ENCODE measurements at regions of chr3 and their contacts with region 1.

Region 1: DNA sequence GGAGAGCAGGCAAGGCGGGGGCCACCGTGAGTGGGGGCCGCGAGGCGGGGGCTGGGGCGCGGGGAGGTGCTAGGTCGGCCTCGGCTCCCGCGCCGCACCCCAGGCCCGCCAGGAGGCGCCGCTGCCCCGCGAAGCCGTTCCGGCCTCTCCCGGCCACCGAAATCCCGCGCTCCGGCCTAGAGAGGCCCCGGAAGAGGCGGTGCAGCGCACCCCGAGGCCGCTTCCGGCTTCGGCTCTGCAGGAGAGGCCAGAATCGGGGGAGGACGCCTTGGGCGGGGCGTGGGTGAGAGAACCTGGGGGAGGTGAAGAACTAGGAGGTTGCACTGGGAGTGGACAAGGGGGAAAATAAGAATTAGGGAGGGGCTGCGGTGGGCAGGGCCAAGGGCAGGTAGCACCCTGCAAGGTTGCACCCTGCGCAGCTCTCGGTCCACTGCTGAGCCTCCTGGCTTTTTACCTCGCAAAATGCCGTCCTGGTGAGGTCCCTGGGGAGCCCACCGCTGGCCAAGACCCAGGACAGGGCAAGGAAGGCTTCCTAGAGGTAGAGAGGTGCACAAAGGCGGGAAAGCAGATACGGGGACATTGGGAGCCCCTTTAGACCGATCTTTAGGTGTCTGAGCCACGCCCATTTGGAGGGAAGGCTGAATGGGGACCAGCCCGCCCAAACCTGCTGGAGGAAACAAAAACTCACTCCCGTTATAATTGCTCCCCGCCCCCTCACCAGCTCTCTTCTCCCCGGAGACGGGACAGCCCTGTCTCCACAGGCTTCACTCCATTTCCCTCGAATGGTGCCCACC is 8.4 kb upstream of the GNAI2 start:
- DNase-seq: peak; percentile 82 to 96 (median 90)
- ATAC-seq: peak; percentile 80
- H3K4me3 ChIP-seq: peak overlapping the region; percentile 68
- H3K4me3 Mint-ChIP-seq: peak overlapping the region; percentile 99
- H3K27ac ChIP-seq: peak overlapping the region; percentile 47 to 70
- H3K27ac Mint-ChIP-seq: peak overlapping the region; percentile 89
- H3K4me1 ChIP-seq: peaks cover 36% of the 10 kb centered on the region
- H3K4me1 Mint-ChIP-seq: peaks cover 32% of the 10 kb centered on the region
- H3K27me3 ChIP-seq: no peaks in the 10 kb centered on the region
- H3K27me3 Mint-ChIP-seq: no peaks in the 10 kb centered on the region
- CTCF ChIP-seq: peak; percentile 85

Region 2: DNA sequence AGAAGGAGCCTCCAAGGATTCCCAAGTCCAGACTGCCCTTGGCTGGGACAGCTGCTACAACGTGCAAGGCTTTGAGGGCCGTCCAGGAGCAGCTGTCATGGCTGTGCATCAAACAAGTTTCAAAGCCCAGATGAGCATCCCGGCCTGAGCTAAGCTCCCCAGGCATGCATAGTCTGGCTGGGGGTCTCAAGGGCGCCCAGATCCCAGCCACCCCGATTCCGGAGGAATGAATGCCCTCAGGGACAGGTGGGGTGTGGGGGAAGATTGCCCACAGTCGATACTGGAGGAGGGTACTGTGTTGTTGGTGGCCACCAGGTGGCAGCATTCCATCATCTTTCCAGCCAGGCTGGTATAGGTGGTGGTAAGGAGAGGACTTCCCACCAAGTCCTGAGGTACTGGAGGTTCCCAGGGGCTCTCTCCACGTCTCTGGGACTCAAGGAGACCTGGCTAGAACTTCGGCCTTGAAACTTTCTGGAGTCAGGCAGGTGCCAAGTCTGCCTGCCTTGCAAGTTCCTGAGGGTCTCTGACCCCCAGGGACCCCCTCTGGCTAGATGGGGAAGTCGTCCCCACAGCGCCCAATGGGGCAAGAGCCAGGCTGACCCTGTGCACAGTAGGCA is 106.1 kb before region 1 on chr3:
- CTCF ChIA-PET with region 1: interaction called, 7 read pairs
- POLR2A ChIA-PET with region 1: interaction called, 4 read pairs
- intact Hi-C with region 1: loop called (anchors 1 to 2 kb)
- DNase-seq: peak; percentile 55 to 86 (median 65)
- ATAC-seq: peak; percentile 87
- H3K4me3 ChIP-seq: no peak overlapping the region
- H3K4me3 Mint-ChIP-seq: no peak overlapping the region
- H3K27ac ChIP-seq: no peak overlapping the region
- H3K27ac Mint-ChIP-seq: peak overlapping the region; percentile 61
- H3K4me1 ChIP-seq: peaks cover 7% of the 10 kb centered on the region
- H3K4me1 Mint-ChIP-seq: peaks cover 6% of the 10 kb centered on the region
- H3K27me3 ChIP-seq: no peaks in the 10 kb centered on the region
- H3K27me3 Mint-ChIP-seq: no peaks in the 10 kb centered on the region
- CTCF ChIP-seq: peak; percentile 86

Region 3: DNA sequence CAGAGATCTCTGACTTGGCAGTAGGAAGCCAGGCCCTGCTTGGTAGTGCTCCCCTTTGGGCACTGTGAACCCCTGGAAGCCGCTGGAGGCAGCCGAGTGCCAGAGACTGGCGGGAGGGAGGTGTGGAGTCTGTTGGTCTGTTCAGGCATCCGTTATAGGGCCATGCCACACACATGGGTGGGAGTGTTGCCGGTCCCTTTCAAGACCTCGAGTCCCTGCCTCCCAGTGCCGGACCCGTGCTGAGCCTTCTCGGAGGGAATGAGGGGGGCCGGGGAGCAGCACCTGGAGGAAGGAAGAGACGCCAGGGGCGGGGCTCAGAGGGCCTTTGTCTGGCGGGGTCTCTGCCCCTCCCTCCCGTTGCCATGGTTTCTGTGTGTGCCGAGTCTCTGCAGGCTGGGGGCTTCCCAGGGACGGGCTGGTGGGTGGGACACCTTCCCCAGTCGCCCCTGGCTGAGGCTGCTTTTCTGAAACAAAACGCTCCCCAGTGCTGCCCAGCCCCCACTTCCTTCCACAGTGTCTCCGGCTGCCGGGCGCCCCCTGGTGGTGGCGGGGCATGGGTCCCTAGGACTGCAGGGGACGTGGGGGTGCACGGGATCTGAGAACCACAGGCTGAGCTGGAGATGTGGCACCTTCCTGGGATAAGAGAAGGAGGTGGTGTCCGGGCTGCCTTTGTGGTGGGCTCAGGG is 18.4 kb after region 1 on chr3:
- CTCF ChIA-PET with region 1: interaction called, 71 read pairs
- POLR2A ChIA-PET with region 1: interaction called, 55 read pairs
- intact Hi-C with region 1: loop called (anchors 1 kb)
- DNase-seq: peak; percentile 92 to 98 (median 94)
- ATAC-seq: peak; percentile 80
- H3K4me3 ChIP-seq: peak overlapping the region; percentile 47
- H3K4me3 Mint-ChIP-seq: peak overlapping the region; percentile 83
- H3K27ac ChIP-seq: peak overlapping the region; percentile 89 to 90
- H3K27ac Mint-ChIP-seq: peak overlapping the region; percentile 92
- H3K4me1 ChIP-seq: peaks cover 100% of the 10 kb centered on the region
- H3K4me1 Mint-ChIP-seq: peaks cover 79% of the 10 kb centered on the region
- H3K27me3 ChIP-seq: no peaks in the 10 kb centered on the region
- H3K27me3 Mint-ChIP-seq: no peaks in the 10 kb centered on the region
- CTCF ChIP-seq: peak; percentile 98

Region 4: DNA sequence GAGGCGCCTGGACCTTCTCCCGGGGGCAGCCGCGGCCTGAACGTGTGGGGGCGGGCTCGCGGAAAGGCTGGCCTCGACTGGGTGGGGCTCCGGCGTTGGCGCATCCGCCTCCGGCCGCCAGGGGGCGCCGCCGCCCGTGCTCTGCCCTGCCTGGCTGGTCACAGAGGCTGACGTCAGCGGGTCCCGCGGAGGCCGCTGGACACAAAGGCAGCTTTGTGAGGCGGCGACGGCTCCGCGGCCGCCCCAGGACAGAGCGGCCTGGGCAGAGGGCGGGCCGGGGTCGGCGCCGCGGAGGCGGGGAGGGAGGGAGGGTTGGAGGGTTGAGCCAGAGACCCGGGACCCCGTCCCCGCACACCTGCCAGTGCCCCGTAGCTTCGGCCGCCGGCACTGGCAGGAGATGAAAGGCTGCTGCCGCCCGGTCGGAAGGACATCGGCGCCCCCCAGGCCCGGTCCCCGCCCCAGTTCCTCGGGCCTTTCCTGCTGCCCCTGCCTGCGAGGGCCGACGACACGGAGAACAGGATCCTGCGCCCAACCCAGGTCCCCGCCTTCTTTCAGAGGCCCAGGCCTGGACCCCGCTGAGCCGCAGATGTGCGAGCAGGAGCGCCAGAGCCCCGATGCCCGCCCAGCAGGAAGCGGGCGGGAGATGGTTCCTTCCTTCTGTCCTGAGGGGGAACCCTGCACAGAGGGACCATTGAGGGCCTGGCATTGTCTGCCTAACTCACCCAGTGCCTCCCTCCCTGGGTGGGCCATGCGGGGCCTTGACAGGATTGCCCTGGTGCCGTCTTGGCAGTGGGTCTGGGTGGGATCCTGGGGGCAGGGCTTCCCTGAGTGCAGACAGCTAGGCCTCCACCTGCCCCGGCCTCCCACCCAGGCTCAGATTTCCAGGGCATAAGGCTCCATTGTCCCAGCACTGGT is 32.7 kb after region 1 on chr3:
- CTCF ChIA-PET with region 1: interaction called, 4 read pairs
- POLR2A ChIA-PET with region 1: interaction called, 7 read pairs
- intact Hi-C with region 1: loop called in 1 of 2 experiments (anchors 1 kb)
- DNase-seq: peak; percentile 58 to 92 (median 74)
- ATAC-seq: peak; percentile 91
- H3K4me3 ChIP-seq: peak overlapping the region; percentile 52
- H3K4me3 Mint-ChIP-seq: peak overlapping the region; percentile 74
- H3K27ac ChIP-seq: peak overlapping the region in 1 of 2 donors; percentile 29
- H3K27ac Mint-ChIP-seq: peak overlapping the region; percentile 51
- H3K4me1 ChIP-seq: peaks cover 15% of the 10 kb centered on the region
- H3K4me1 Mint-ChIP-seq: peaks cover 3% of the 10 kb centered on the region
- H3K27me3 ChIP-seq: no peaks in the 10 kb centered on the region
- H3K27me3 Mint-ChIP-seq: no peaks in the 10 kb centered on the region
- CTCF ChIP-seq: peak; percentile 87

Measured in CD4-positive, alpha-beta T cell (primary cell).